ENCODE measurements at regions of chr3 and their contacts with region 1.

Region 1: DNA sequence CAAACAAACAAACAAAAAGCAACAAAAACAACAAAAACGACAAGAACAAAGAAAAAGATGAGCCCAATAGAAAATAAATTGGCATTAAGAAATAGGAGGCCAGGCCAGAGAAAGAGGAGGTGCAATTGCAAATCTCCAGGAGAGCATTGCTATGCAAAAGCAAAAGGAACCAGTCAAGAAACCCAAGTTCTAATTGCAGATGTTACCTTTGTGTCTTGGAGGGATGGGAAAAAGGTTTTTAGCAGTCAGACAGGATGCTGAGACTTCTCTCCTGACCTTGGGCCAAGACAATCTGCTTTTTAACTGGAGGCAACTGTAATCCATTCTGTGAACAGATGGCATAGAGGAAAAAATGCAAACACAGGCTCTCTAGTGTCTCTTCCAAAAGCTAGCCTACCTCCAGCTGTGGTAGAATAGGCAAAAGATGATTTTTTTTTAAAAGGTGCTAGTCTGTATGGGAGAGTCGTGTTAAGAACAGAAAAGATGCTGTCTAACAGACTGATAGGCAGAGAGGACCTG is 56.4 kb downstream of the LSAMP start:
- DNase-seq: no peak
- ATAC-seq: no peak
- H3K4me3 ChIP-seq: no peak overlapping the region
- H3K27ac ChIP-seq: no peak overlapping the region
- H3K4me1 ChIP-seq: no peaks in the 10 kb centered on the region
- H3K27me3 ChIP-seq: no peaks in the 10 kb centered on the region
- CTCF ChIP-seq: no peak

Region 2: DNA sequence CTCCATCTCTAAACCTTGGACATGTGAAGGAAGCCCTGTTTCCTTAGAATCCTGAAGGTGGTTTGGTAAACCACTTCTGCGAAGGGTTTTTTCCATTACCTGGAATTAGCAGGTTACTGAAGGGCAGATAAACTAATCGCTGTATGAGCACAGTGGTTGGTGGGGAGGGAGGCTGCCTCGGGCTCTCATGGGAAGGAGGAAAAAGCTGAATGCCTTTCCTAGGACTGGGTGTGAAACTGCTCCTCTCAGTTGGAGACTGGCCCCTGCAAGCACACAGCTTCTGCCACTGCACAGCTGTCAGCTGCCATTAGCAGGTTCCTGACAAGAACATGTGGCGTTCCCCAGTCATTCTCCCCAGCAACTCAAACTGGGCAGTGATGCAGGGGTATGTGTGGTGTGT is 389.3 kb before region 1 on chr3:
- CTCF ChIA-PET with region 1: no interaction called
- POLR2A ChIA-PET with region 1: no interaction called
- in situ Hi-C with region 1: no loop called
- intact Hi-C with region 1: no loop called
- DNase-seq: no peak
- ATAC-seq: no peak
- H3K4me3 ChIP-seq: no peak overlapping the region
- H3K27ac ChIP-seq: no peak overlapping the region
- H3K4me1 ChIP-seq: no peaks in the 10 kb centered on the region
- H3K27me3 ChIP-seq: no peaks in the 10 kb centered on the region
- CTCF ChIP-seq: no peak

Region 3: GRCh38 chr3:116211901-116212300 is 177.0 kb before region 1 on chr3:
- CTCF ChIA-PET with region 1: no interaction called
- POLR2A ChIA-PET with region 1: no interaction called
- in situ Hi-C with region 1: no loop called
- intact Hi-C with region 1: no loop called
- DNase-seq: no peak
- ATAC-seq: no peak
- H3K4me3 ChIP-seq: no peak overlapping the region
- H3K27ac ChIP-seq: no peak overlapping the region
- H3K4me1 ChIP-seq: no peaks in the 10 kb centered on the region
- H3K27me3 ChIP-seq: no peaks in the 10 kb centered on the region
- CTCF ChIP-seq: no peak

Region 4: DNA sequence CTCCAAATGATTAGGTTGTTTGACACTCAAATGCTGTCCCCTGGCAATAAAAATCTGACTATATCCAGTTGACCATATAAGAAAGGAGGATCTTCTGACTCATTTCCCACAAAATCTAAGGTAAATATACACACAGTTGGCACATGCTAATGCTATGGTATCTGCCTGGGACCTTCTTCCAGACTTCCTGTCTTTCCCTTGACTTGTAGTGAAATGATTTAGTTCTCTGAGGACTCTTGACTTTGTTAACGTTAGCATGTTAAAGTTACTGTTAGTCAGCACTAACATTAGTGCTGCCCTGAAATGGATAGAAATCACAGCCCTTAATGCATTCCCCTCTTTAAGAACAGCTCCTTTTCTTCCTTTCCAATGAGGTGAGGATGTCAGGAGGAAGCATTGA is 180.7 kb after region 1 on chr3:
- CTCF ChIA-PET with region 1: interaction called, 12 read pairs
- POLR2A ChIA-PET with region 1: no interaction called
- in situ Hi-C with region 1: no loop called
- intact Hi-C with region 1: no loop called
- DNase-seq: no peak
- ATAC-seq: no peak
- H3K4me3 ChIP-seq: no peak overlapping the region
- H3K27ac ChIP-seq: no peak overlapping the region
- H3K4me1 ChIP-seq: no peaks in the 10 kb centered on the region
- H3K27me3 ChIP-seq: no peaks in the 10 kb centered on the region
- CTCF ChIP-seq: no peak

Region 5: GRCh38 chr3:116691041-116691440 is 302.1 kb after region 1 on chr3:
- CTCF ChIA-PET with region 1: no interaction called
- POLR2A ChIA-PET with region 1: no interaction called
- in situ Hi-C with region 1: no loop called
- intact Hi-C with region 1: no loop called
- DNase-seq: no peak
- ATAC-seq: no peak
- H3K4me3 ChIP-seq: no peak overlapping the region
- H3K27ac ChIP-seq: no peak overlapping the region
- H3K4me1 ChIP-seq: no peaks in the 10 kb centered on the region
- H3K27me3 ChIP-seq: no peaks in the 10 kb centered on the region
- CTCF ChIP-seq: no peak